Mucosa of descending colon (tissue), 3 donors: ENCODE measurements at regions of chr15 and their contacts with region 1.

Region 1: DNA sequence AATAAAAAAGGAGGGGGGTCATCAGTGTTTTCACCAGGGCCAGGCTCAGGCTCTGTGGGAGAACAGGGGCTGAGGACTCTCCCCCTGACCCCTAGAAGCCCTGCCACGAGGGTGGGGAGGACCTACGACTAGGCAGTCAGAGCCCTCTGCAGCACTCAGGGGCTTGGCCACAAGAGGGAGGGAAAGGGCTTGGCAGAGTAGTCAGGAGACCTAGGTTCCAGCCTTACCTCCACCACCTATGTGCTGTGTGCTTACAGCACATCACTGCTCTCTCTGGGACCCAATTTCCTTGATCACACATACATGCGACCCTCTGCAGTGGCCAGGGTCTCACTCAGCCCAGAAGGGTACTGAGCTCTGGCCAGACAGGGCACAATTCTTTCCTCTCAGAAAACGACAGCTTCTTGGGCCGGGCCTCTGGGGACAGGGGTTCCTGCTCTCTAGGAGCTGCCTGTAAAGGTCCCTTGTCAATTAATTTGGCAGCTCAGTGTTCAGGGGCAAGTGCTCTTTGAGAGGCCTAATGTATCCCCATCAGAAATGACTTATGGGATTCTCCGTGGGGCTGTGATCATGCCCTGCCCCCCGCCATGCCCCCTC is 16.4 kb upstream of the SKIC8 start:
- DNase-seq: peak in 2 of 3 donors; percentile 58 to 69
- ATAC-seq: peak; percentile 56
- H3K4me3 ChIP-seq: no peak overlapping the region
- H3K4me1 ChIP-seq: peaks cover 14% of the 10 kb centered on the region
- CTCF ChIP-seq: no peak

Region 2: DNA sequence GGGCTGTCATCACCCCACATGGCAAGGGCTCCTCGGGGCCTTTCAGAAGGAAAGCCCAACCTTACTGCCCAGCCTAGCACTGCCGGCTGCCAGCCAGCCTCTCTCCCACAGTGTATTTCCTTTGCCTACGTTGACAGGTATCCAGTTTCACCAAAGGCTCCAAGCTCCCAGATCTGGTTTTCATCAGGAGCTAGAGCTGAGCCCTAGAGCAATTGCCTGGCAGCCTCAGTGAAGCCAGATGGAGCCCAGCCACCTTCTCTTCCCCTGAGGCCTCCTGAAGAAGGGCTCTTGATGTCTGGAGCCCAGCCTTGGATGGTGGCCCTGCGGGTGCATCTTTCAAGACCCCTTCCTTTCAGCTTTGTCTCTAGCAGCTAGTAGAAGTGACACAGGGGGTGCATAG is 44.6 kb after region 1 on chr15:
- intact Hi-C with region 1: no loop called
- DNase-seq: no peak
- ATAC-seq: no peak
- H3K4me3 ChIP-seq: no peak overlapping the region
- H3K4me1 ChIP-seq: peaks cover 3% of the 10 kb centered on the region
- CTCF ChIP-seq: no peak

Region 3: DNA sequence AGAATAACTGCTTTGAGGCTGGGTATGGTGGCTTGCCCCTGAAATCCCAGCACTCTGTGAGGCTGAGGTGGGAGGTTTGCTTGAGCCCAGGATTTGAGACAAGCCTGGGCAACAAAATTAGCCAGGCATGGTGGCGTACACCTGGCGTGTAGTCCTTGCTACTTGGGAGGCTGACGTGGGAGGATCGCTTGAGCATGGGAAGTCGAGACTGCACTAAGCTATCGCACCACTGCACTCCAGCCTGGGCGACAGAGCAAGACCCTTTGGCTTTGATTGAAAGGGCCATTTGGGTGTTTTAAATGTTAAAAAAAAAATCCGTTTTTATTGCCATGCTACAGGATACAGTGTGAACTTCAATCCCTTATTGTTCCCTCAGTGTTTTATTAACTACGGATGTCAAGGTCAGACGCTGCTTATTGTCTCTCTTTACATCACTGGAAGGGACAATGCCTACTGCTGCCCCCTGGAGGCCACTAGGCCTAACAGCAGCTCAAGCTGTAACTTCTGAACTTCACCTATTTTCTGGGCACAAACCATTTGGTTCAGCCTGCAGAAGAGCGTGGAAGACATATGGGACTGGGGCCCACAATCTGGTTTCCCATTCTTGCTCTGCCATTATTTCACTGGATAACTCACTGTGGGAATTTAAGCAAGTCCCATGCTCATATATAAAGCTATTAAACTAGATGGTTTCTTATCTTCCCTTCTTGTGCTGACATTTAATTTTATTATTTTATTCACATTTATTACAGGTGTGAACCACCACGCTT is 107.0 kb after region 1 on chr15:
- intact Hi-C with region 1: loop called in 1 of 2 experiments (anchors 5 kb)
- DNase-seq: peak; percentile 69 to 82 (median 80)
- ATAC-seq: peak; percentile 98
- H3K4me3 ChIP-seq: no peak overlapping the region
- H3K4me1 ChIP-seq: peaks cover 20% of the 10 kb centered on the region
- CTCF ChIP-seq: peak; percentile 89

Region 4: GRCh38 chr15:78671626-78672211 is 355.9 kb after region 1 on chr15:
- intact Hi-C with region 1: no loop called
- DNase-seq: no peak
- ATAC-seq: no peak
- H3K4me3 ChIP-seq: no peak overlapping the region
- H3K4me1 ChIP-seq: no peaks in the 10 kb centered on the region
- CTCF ChIP-seq: no peak